Activated naive CD4-positive, alpha-beta T cell treated with anti-CD3 and anti-CD28 coated beads for 36 hours (primary cell): ENCODE measurements at regions of chr19 and their contacts with region 1.

Region 1: GRCh38 chr19:11203194-11204075 is 6.1 kb upstream of the KANK2 start:
- DNase-seq: peak; percentile 43
- H3K4me3 Mint-ChIP-seq: no peak overlapping the region
- H3K27ac Mint-ChIP-seq: no peak overlapping the region
- H3K4me1 Mint-ChIP-seq: no peaks in the 10 kb centered on the region
- H3K27me3 Mint-ChIP-seq: no peaks in the 10 kb centered on the region

Region 2: GRCh38 chr19:11035441-11036377 is 167.7 kb before region 1 on chr19:
- CTCF ChIA-PET with region 1: interaction called, 3 read pairs
- intact Hi-C with region 1: loop called (anchors 1 kb)
- DNase-seq: peak; percentile 95
- H3K4me3 Mint-ChIP-seq: no peak overlapping the region
- H3K27ac Mint-ChIP-seq: peak overlapping the region; percentile 56
- H3K4me1 Mint-ChIP-seq: peaks cover 8% of the 10 kb centered on the region
- H3K27me3 Mint-ChIP-seq: no peaks in the 10 kb centered on the region

Region 3: DNA sequence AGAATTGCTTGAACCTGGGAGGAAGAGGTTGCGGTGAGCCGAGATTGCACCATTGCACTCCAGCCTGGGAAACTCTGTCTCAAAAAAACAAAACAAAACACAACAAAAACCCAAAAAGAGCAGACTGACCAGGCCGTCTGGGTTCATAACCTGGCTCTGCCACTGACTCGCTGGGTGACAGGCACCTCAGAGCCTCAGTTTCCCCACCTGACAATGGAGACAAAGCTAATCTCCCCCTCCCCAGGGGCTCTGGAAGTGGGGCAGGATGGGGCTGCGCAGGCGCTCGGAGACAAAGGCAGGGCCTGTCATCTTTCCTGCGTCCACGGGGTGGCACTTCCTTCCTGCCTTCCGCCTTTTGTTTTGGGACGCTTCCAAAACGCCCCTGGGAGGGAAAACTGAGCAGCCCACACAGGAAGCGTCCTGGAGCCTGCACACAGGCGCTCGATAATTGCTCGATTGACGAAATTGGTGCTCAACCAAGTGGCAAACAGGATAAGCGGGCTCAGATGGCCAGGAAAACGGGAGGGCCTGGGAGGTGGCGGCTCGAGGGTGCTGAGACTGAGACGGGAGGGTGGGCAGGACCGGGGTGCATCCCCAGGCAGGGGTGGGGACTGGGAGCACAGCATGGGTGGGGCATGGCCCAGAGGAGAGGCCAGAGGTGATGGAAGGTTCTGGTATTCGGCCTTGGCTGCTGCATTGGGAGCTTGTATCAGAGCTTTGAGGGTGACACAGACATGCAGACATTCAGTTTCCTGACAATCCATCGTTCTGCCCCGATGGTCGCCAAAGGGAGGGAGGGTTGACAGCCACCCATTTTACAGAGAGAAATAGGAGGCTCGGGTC is 65.7 kb before region 1 on chr19:
- CTCF ChIA-PET with region 1: interaction called, 6 read pairs
- intact Hi-C with region 1: loop called (anchors 1 kb)
- DNase-seq: peak; percentile 70
- H3K4me3 Mint-ChIP-seq: peak overlapping the region; percentile 61
- H3K27ac Mint-ChIP-seq: no peak overlapping the region
- H3K4me1 Mint-ChIP-seq: peaks cover 10% of the 10 kb centered on the region
- H3K27me3 Mint-ChIP-seq: no peaks in the 10 kb centered on the region

Region 4: DNA sequence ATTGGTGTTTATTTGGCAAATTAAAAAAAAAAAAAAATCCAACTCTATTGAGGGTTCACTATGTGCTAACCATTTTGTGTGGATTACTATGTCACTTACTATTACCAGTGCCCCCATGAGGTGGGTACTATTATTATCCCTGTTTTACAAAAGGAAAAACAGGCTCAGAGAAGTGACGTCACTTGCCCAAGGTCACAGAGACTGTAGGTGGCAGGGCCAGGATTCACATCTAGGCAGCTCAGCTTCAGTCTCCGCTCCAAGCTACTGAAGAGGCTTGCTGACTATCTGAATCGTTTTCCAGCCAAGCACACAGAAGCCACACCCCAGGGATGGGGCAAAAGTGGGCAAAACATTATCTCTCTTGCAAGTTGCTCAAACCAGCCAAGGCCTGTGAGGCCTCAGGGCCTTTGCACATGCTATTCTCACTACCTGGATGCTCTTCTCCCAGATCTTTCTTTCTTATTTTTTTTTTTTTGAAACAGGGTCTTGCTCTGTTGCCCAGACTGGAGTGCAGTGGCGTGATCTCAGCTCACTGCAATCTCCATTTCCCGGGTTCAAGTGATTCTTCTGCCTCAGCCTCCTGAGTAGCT is 31.1 kb after region 1 on chr19:
- CTCF ChIA-PET with region 1: no interaction called
- intact Hi-C with region 1: no loop called
- DNase-seq: no peak
- H3K4me3 Mint-ChIP-seq: no peak overlapping the region
- H3K27ac Mint-ChIP-seq: no peak overlapping the region
- H3K4me1 Mint-ChIP-seq: no peaks in the 10 kb centered on the region
- H3K27me3 Mint-ChIP-seq: no peaks in the 10 kb centered on the region